B cell (primary cell): ENCODE measurements at regions of chr2 and their contacts with region 1.

Region 1: GRCh38 chr2:64644177-64645004 is 9.3 kb downstream of the SERTAD2 start:
- DNase-seq: peak; percentile 74
- ATAC-seq: peak; percentile 37
- H3K4me3 ChIP-seq: peak overlapping the region; percentile 21 to 50 (median 29)
- H3K4me3 Mint-ChIP-seq: peak overlapping the region; percentile 89
- H3K27ac ChIP-seq: peak overlapping the region; percentile 66 to 81
- H3K27ac Mint-ChIP-seq: peak overlapping the region; percentile 97
- H3K4me1 ChIP-seq: peaks cover 78 to 88% of the 10 kb centered on the region in 2 donors
- H3K4me1 Mint-ChIP-seq: peaks cover 89% of the 10 kb centered on the region
- H3K27me3 ChIP-seq: no peaks in the 10 kb centered on the region
- H3K27me3 Mint-ChIP-seq: no peaks in the 10 kb centered on the region
- CTCF ChIP-seq: no peak

Region 2: DNA sequence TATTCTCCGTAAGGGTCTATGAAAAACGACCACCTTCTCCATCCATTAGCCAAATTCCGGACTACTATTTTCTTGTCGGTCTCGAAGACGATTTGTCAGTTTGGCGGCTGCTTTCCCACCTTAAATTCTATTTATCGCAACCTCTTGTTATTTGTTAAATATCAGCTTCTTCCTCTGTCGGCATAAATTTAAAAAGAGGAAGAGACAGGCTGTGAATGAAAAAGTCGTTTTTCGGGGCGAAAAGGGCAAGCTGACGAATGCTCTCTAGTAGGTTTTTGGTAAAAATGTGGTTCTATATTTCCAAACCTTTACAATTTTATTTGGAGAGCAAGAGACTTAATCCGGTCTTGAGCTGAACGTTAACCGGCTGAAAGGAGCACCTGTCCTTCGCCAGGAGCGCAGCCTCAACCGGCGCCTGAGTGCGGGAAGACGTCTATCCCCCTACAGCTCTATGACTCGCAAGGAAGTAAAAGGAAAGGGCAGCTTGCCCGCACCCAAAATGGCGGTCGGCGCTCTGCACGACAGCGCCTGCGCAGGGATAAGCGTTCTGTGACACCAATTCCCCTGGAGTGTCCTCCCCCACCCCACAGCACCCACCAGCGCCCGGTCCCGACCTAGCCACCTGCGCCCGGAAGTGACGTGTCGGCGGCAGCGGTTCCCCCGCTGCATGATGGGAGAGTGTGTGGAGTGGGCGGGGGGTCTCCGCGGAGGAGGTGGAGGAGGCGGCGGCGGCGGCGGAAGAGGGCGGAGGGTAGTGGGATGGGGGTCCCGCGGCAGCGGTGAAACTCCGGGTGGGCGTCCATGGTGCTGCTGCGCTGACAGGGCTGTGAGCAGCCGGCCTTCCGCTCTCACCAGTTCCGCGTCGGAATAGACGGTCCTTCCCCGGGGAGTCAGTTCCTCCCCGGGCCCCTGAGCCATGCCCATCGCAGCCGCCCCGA is 120.5 kb before region 1 on chr2 and contains the start of gene AFTPH:
- CTCF ChIA-PET with region 1: interaction called, 20 read pairs
- POLR2A ChIA-PET with region 1: interaction called, 3 read pairs
- intact Hi-C with region 1: loop called (anchors 1 kb)
- DNase-seq: peak; percentile 99
- ATAC-seq: peak; percentile 89
- H3K4me3 ChIP-seq: peak within 1 kb of the TSS; percentile 74 to 99 (median 97)
- H3K4me3 Mint-ChIP-seq: peak within 1 kb of the TSS; percentile 98
- H3K27ac ChIP-seq: peak within 1 kb of the TSS; percentile 92 to 97
- H3K27ac Mint-ChIP-seq: peak within 1 kb of the TSS; percentile 100
- H3K4me1 ChIP-seq: peaks cover 34 to 36% of the 10 kb centered on the region in 2 donors
- H3K4me1 Mint-ChIP-seq: peaks cover 45% of the 10 kb centered on the region
- H3K27me3 ChIP-seq: no peaks in the 10 kb centered on the region
- H3K27me3 Mint-ChIP-seq: no peaks in the 10 kb centered on the region
- CTCF ChIP-seq: no peak
- total RNA-seq, gene AFTPH: 91.6 and 94.1 TPM in 2 replicates

Region 3: DNA sequence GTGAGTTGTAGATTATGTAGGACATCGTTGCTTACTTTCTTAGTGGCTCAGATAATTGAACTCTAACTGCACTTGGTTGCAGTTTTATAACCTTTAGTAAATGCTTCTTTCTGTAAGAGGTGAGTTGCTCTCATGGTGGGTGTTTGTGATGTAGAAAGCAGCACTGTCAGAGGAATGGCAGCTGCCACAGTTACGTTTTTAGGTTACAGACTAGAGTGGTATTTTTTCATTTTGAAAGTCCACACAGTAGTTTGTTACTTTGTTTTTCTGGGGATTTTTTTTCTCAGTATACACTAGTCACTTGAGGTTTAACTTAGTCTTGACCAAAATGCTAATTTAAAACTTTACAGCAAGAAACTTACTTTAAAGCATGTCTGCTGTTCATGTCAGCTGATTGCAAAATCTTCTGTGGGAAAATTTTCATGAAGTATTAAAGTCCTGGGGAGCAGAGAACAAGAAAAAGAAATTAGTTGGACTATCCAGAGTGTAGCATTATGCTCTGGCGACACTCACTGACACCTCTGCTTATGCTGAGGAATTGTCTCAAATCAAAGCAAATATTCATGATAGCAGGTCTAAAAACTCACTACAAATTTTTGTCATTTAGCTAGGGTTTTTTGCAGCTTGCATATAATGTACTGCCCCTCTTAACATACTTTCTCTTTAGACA is 105.5 kb before region 1 on chr2:
- CTCF ChIA-PET with region 1: no interaction called
- POLR2A ChIA-PET with region 1: no interaction called
- intact Hi-C with region 1: no loop called
- DNase-seq: no peak
- ATAC-seq: no peak
- H3K4me3 ChIP-seq: no peak overlapping the region
- H3K4me3 Mint-ChIP-seq: no peak overlapping the region
- H3K27ac ChIP-seq: no peak overlapping the region
- H3K27ac Mint-ChIP-seq: no peak overlapping the region
- H3K4me1 ChIP-seq: peaks cover 16 to 27% of the 10 kb centered on the region in 2 donors
- H3K4me1 Mint-ChIP-seq: peaks cover 69% of the 10 kb centered on the region
- H3K27me3 ChIP-seq: no peaks in the 10 kb centered on the region
- H3K27me3 Mint-ChIP-seq: no peaks in the 10 kb centered on the region
- CTCF ChIP-seq: no peak

Region 4: DNA sequence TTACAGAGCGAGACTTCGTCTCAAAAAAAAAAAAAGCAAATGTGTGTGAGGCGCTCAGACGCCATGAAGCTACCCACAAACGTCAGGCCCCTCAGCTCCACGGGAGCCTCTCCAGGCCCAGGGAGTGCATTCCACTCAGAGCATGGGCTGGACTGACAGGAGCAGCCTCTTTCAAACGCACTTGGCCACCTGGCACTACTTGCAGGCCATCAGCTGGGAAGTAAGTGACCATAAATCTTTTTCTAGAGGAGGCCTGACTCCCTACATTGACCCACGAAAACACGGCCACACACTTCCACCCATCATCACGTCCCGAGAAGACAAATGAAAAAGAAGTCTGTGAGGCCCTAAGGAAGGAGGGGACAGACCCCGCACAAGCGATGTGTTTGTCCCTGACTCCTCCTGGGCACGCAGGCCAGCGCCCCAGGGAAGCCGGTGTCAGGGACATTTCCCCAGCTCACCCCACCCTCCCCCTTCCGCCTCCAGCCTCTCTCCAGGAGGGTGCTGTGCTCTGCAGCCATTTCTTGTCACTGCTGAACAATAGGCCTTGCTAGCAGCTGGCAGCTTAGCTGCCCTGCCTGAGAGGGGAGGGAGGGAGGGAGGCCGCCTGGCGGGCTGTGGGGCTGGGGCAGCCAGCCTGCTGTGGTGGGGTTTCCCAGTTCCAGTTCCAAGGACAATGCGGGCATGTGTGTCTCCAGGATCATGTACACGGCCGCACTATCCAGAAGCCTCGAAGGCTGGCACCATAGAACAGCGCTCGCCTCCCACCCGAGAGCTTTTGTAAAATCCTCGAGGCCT is 17.2 kb before region 1 on chr2:
- CTCF ChIA-PET with region 1: interaction called, 16 read pairs
- POLR2A ChIA-PET with region 1: interaction called, 3 read pairs
- intact Hi-C with region 1: no loop called
- DNase-seq: no peak
- ATAC-seq: no peak
- H3K4me3 ChIP-seq: no peak overlapping the region
- H3K4me3 Mint-ChIP-seq: no peak overlapping the region
- H3K27ac ChIP-seq: no peak overlapping the region
- H3K27ac Mint-ChIP-seq: no peak overlapping the region
- H3K4me1 ChIP-seq: peaks cover 7 to 13% of the 10 kb centered on the region in 2 donors
- H3K4me1 Mint-ChIP-seq: peaks cover 26% of the 10 kb centered on the region
- H3K27me3 ChIP-seq: no peaks in the 10 kb centered on the region
- H3K27me3 Mint-ChIP-seq: no peaks in the 10 kb centered on the region
- CTCF ChIP-seq: no peak

Region 5: GRCh38 chr2:64730551-64731262 is 86.3 kb after region 1 on chr2:
- CTCF ChIA-PET with region 1: interaction called, 22 read pairs
- POLR2A ChIA-PET with region 1: interaction called, 9 read pairs
- intact Hi-C with region 1: no loop called
- DNase-seq: peak; percentile 70
- ATAC-seq: peak; percentile 47
- H3K4me3 ChIP-seq: peak overlapping the region; percentile 43 to 81 (median 61)
- H3K4me3 Mint-ChIP-seq: peak overlapping the region; percentile 87
- H3K27ac ChIP-seq: peak overlapping the region; percentile 84
- H3K27ac Mint-ChIP-seq: peak overlapping the region; percentile 97
- H3K4me1 ChIP-seq: peaks cover 50% of the 10 kb centered on the region in 2 donors
- H3K4me1 Mint-ChIP-seq: peaks cover 57% of the 10 kb centered on the region
- H3K27me3 ChIP-seq: no peaks in the 10 kb centered on the region
- H3K27me3 Mint-ChIP-seq: no peaks in the 10 kb centered on the region
- CTCF ChIP-seq: no peak

Region 6: GRCh38 chr2:64831134-64831976 is 187.0 kb after region 1 on chr2:
- CTCF ChIA-PET with region 1: interaction called, 78 read pairs
- POLR2A ChIA-PET with region 1: no interaction called
- intact Hi-C with region 1: loop called (anchors 1 kb)
- DNase-seq: peak; percentile 82
- ATAC-seq: peak; percentile 91
- H3K4me3 ChIP-seq: peak overlapping the region in 3 of 5 experiments; percentile 11 to 38 (median 16)
- H3K4me3 Mint-ChIP-seq: peak overlapping the region; percentile 63
- H3K27ac ChIP-seq: no peak overlapping the region
- H3K27ac Mint-ChIP-seq: peak overlapping the region; percentile 77
- H3K4me1 ChIP-seq: peaks cover 8 to 12% of the 10 kb centered on the region in 2 donors
- H3K4me1 Mint-ChIP-seq: peaks cover 13% of the 10 kb centered on the region
- H3K27me3 ChIP-seq: no peaks in the 10 kb centered on the region
- H3K27me3 Mint-ChIP-seq: no peaks in the 10 kb centered on the region
- CTCF ChIP-seq: peak; percentile 96

Region 7: GRCh38 chr2:64932371-64933216 is 288.2 kb after region 1 on chr2:
- CTCF ChIA-PET with region 1: no interaction called
- POLR2A ChIA-PET with region 1: interaction called, 10 read pairs
- intact Hi-C with region 1: no loop called
- DNase-seq: peak; percentile 68
- ATAC-seq: peak; percentile 75
- H3K4me3 ChIP-seq: peak overlapping the region; percentile 51 to 66 (median 59)
- H3K4me3 Mint-ChIP-seq: peak overlapping the region; percentile 83
- H3K27ac ChIP-seq: peak overlapping the region; percentile 74 to 87
- H3K27ac Mint-ChIP-seq: peak overlapping the region; percentile 83
- H3K4me1 ChIP-seq: peaks cover 92 to 95% of the 10 kb centered on the region in 2 donors
- H3K4me1 Mint-ChIP-seq: peaks cover 88% of the 10 kb centered on the region
- H3K27me3 ChIP-seq: no peaks in the 10 kb centered on the region
- H3K27me3 Mint-ChIP-seq: no peaks in the 10 kb centered on the region
- CTCF ChIP-seq: no peak

Region 8: DNA sequence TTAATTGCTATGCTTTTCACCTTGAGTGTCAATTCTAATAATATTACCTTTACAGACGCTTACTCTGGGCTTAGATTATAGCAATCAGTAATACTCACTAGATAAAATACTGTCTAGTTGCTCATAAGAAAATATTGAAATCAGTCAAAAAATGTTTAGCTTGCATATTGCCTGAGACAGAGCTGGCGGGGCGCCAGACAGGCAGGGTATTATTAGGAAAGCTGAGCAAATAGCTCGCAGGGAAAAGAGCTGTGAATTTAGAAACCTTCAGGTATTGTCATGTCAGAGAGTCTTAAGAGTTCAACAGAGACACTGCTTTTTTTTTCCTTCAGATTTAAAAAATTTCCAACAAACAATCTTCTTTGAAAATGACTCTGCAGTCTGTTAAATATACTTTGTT is 1909.0 kb after region 1 on chr2:
- CTCF ChIA-PET with region 1: no interaction called
- POLR2A ChIA-PET with region 1: no interaction called
- intact Hi-C with region 1: no loop called
- DNase-seq: no peak
- ATAC-seq: no peak
- H3K4me3 ChIP-seq: no peak overlapping the region
- H3K4me3 Mint-ChIP-seq: no peak overlapping the region
- H3K27ac ChIP-seq: no peak overlapping the region
- H3K27ac Mint-ChIP-seq: no peak overlapping the region
- H3K4me1 ChIP-seq: no peaks in the 10 kb centered on the region
- H3K4me1 Mint-ChIP-seq: peaks cover 11% of the 10 kb centered on the region
- H3K27me3 ChIP-seq: no peaks in the 10 kb centered on the region
- H3K27me3 Mint-ChIP-seq: peaks cover 33% of the 10 kb centered on the region
- CTCF ChIP-seq: no peak